Right ventricle myocardium inferior (tissue), 1 donor: ENCODE measurements at regions of chr1 and their contacts with region 1.

Region 1: DNA sequence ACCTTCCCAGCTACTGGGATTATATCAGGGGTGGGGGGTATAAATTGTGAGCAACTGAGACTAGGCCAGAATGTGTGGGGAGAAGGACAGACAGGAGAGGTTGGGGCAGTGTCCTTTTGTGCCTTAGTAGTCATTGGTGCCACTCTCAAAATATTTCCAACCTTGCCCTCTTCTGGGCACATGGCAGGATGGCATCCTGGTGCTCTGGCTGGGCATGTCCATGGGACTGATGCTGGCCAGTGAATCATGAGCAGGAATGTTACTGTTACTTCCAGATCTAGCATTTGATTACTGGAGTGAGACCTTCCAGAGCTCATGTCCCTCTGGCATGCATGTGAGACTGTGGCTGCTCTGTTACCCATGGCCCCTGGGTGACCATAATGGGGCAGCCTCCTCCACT is 151.2 kb downstream of the MATN1 start:
- DNase-seq: no peak
- ATAC-seq: peak; percentile 59

Region 2: GRCh38 chr1:30353637-30354036 is 218.6 kb before region 1 on chr1:
- intact Hi-C with region 1: loop called (anchors 5 kb)
- DNase-seq: no peak
- ATAC-seq: no peak